ENCODE measurements at regions of chr1 and their contacts with region 1.

Region 1: DNA sequence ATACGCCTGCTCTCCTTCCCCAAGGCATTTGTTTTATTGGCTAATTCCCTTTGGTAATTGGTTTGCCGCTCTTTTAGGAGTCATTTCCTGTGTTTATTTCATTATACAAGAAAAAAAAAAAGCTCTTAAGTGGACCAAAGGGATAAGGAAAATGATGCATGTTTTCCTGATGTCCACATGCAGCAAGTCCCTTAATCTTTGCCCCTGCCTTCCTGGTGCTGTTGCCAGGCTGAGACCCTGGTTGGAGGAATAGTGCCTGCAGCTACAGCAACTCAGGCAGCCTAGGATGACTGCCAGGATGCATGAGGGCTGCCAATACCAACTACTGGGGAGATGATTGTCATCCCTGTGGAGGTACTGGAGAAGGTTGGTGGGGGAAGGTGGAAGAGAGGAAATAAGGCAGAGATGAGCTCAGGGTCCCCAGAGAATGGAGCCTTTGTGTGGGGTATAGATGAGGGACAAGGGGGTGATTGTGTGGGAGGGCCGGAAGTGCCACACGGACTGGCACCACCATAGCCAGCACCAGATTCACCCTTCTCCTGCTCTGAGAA is 6.1 kb upstream of the GATAD2B start:
- DNase-seq: peak; percentile 91
- H3K4me3 ChIP-seq: no peak overlapping the region
- H3K27ac ChIP-seq: peak overlapping the region; percentile 4
- H3K4me1 ChIP-seq: peaks cover 19% of the 10 kb centered on the region
- H3K27me3 ChIP-seq: no peaks in the 10 kb centered on the region
- CTCF ChIP-seq: no peak
- POLR2A ChIP-seq: no peak

Region 2: DNA sequence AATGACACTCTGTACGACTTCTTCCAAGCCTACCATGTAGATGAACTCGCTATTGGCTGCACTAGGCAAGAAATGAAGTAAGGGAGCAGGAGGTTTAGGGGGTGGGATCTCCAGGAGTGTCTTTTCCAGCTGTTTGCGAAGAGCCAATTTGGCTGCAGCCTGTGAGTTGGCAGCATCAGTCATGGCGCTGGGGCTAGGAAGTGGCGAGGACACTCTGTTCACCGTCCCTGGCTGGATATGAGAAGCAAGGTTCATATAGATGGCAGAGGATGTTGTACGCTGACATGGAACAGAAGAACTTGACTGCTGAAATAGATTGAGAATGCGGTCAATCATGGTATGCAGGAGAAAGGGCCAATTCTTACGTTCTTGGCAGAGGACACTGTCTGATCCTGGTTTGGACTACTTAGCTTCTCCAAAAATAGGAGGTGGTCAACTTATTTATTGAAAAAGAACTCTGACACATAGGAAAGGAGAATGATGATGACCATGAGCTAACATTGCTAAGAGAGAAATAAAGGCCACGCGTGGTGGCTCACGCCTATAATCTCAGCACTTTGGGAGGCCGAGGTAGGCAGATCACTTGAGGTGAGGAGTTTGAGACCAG is 112.5 kb before region 1 on chr1:
- CTCF ChIA-PET with region 1: interaction called, 11 read pairs
- POLR2A ChIA-PET with region 1: no interaction called
- dilution Hi-C with region 1: no loop called
- intact Hi-C with region 1: no loop called
- DNase-seq: no peak
- H3K4me3 ChIP-seq: no peak overlapping the region
- H3K27ac ChIP-seq: no peak overlapping the region
- H3K4me1 ChIP-seq: peaks cover 10% of the 10 kb centered on the region
- H3K27me3 ChIP-seq: no peaks in the 10 kb centered on the region
- CTCF ChIP-seq: no peak
- POLR2A ChIP-seq: no peak

Region 3: DNA sequence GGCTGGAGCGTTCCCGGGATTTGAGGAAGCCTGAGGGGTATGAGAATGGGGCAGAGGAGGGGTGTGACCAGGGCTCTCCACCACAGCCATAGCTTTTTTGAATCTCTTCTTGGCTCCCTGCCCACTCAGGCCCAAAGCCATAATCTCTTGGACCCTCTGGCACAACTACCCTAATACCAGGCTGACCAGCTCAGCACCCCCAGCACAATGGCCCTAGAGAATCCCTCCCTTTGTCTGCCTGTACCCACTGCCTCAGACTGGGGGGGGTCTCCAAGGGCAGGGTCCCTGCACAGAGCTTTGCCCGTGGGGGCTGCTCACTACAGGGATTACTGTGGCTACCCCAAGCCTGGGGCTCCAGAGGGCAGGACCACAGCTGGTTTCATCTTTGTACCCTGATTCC is 10.2 kb after region 1 on chr1:
- CTCF ChIA-PET with region 1: interaction called, 34 read pairs
- POLR2A ChIA-PET with region 1: no interaction called
- dilution Hi-C with region 1: no loop called
- intact Hi-C with region 1: no loop called
- DNase-seq: no peak
- H3K4me3 ChIP-seq: no peak overlapping the region
- H3K27ac ChIP-seq: no peak overlapping the region
- H3K4me1 ChIP-seq: no peaks in the 10 kb centered on the region
- H3K27me3 ChIP-seq: no peaks in the 10 kb centered on the region
- CTCF ChIP-seq: no peak
- POLR2A ChIP-seq: no peak

Measured in endothelial cell of umbilical vein (primary cell).